MCF 10A (cell line): ENCODE measurements at regions of chr12 and their contacts with region 1.

Region 1: DNA sequence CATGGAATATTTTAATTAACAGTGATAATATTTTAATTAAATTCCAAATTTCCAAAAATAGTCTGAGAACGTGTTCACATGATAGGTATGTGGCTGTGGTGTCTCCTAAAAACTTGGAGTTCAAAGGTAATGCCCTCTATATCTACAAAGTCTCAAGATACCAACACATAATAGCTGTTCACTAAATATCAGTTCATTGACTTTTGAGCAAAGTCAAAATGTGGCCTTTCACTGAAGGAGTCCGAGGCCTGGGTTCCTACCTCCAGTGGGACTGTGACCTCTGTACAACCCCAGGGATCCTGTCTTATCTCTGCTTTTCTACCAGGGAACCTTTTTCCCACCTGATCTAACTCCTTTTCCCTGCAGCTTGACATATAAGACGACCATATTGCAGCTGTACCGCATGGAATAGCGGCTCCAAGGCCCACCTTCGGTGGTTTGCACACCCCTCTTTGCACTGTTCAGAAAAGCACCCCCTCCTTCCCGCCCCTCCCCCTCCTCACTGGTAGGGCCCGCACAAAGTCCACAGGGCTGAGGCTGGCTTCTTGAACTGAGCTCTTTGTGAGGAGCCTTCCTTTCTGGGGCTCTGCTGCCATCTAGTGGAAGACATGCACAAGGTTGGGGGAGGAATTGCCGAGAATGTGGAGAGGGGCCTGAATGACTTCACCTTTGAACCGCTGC is 3.1 kb downstream of the CCND2 start:
- DNase-seq: peak; percentile 91
- H3K4me3 Mint-ChIP-seq: peak overlapping the region; percentile 79
- H3K27ac Mint-ChIP-seq: no peak overlapping the region
- H3K4me1 Mint-ChIP-seq: peaks cover 19% of the 10 kb centered on the region
- H3K27me3 Mint-ChIP-seq: peaks cover 41% of the 10 kb centered on the region
- CTCF ChIP-seq: peak; percentile 93

Region 2: GRCh38 chr12:3896801-3897331 is 379.8 kb before region 1 on chr12:
- CTCF ChIA-PET with region 1: interaction called, 220 read pairs
- POLR2A ChIA-PET with region 1: interaction called, 5 read pairs
- intact Hi-C with region 1: no loop called
- DNase-seq: no peak
- H3K4me3 Mint-ChIP-seq: no peak overlapping the region
- H3K27ac Mint-ChIP-seq: no peak overlapping the region
- H3K4me1 Mint-ChIP-seq: peaks cover 8% of the 10 kb centered on the region
- H3K27me3 Mint-ChIP-seq: peaks cover 13% of the 10 kb centered on the region
- CTCF ChIP-seq: no peak

Region 3: DNA sequence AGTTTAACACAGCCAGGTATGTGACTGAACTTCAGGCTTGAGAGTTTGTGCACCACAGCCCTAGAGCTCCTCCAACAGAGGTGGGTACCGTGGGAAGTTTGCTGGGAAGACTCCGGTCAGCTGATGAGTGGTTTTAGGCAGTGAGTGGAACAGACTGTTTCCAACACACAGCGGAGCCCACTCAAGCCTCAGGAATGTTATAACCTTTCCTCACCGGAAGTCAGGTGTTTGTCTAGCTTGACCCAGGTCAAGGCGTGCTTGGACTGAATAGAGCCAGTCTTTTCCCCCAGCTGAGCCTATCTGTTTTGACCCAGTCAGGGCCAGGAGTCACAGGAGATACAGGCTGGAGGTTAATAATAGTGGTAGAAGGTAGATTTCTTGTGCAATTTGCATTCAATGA is 265.1 kb before region 1 on chr12:
- CTCF ChIA-PET with region 1: interaction called, 16 read pairs
- POLR2A ChIA-PET with region 1: interaction called, 7 read pairs
- intact Hi-C with region 1: no loop called
- DNase-seq: peak; percentile 83
- H3K4me3 Mint-ChIP-seq: no peak overlapping the region
- H3K27ac Mint-ChIP-seq: peak overlapping the region; percentile 51
- H3K4me1 Mint-ChIP-seq: peaks cover 16% of the 10 kb centered on the region
- H3K27me3 Mint-ChIP-seq: no peaks in the 10 kb centered on the region
- CTCF ChIP-seq: no peak

Region 4: DNA sequence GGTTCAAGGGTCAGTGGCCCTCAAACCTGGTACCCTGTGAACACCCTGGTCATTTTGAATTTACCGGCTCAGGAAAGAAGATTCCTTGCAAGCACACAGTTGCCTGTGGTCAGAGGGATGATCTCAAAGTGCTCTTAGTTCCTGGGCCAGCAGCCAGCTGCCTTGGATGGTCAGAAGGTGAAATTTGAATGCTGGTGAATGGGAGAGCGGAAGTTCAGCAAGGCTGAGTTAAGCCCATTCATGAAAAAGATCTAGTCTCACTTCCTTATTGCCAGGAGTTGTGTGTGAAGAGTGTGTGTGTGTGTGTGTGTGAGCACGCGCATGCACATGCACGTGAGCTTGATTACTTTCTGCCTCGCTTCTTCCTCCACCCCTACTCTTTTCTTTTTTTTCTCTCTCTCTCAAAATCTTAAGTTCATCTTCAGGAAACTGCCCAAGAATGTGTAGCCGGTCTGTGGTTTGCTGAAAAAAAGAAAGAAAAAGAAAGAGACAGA is 158.6 kb before region 1 on chr12:
- CTCF ChIA-PET with region 1: interaction called, 13 read pairs
- POLR2A ChIA-PET with region 1: no interaction called
- intact Hi-C with region 1: no loop called
- DNase-seq: no peak
- H3K4me3 Mint-ChIP-seq: no peak overlapping the region
- H3K27ac Mint-ChIP-seq: no peak overlapping the region
- H3K4me1 Mint-ChIP-seq: peaks cover 18% of the 10 kb centered on the region
- H3K27me3 Mint-ChIP-seq: peaks cover 19% of the 10 kb centered on the region
- CTCF ChIP-seq: no peak

Region 5: DNA sequence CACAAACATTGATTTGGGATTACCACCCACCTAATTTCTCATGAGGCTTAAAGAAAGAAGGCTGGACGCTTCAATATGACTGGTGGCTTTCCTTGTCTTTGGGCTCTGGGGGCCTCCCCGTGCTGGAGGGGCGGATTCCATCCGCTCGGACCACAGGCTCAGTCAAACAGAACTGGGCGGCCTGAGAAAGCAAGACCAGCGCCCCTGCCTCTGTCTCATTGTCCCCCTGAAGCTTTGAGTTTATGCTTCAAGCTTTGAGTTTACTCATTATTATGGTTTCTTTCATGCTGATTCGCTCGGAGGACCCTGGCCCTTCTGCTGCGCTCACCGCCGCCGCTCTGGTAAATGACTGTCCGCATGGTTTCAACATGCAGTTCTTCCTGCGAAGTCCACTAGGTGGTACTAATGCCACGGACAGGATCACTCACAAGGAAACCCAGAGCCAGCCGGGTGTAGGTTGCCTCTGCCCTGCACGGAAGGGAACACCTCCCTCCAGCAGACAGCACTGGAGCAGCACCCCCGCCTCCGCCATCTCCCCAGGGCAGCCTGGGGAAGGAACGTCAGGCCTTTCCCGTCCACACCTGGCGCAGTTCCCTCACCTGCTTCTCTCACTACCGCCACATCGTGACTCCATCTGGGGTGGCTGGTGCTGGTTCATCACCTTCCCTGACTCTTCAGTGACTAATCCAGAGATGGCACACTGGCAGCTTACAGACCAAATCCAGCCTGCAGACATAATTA is 31.1 kb after region 1 on chr12:
- CTCF ChIA-PET with region 1: interaction called, 16 read pairs
- POLR2A ChIA-PET with region 1: interaction called, 3 read pairs
- intact Hi-C with region 1: no loop called
- DNase-seq: peak; percentile 88
- H3K4me3 Mint-ChIP-seq: peak overlapping the region; percentile 60
- H3K27ac Mint-ChIP-seq: peak overlapping the region; percentile 36
- H3K4me1 Mint-ChIP-seq: peaks cover 10% of the 10 kb centered on the region
- H3K27me3 Mint-ChIP-seq: peaks cover 12% of the 10 kb centered on the region
- CTCF ChIP-seq: peak; percentile 78